ENCODE measurements at regions of chr1 and their contacts with region 1.

Region 1: DNA sequence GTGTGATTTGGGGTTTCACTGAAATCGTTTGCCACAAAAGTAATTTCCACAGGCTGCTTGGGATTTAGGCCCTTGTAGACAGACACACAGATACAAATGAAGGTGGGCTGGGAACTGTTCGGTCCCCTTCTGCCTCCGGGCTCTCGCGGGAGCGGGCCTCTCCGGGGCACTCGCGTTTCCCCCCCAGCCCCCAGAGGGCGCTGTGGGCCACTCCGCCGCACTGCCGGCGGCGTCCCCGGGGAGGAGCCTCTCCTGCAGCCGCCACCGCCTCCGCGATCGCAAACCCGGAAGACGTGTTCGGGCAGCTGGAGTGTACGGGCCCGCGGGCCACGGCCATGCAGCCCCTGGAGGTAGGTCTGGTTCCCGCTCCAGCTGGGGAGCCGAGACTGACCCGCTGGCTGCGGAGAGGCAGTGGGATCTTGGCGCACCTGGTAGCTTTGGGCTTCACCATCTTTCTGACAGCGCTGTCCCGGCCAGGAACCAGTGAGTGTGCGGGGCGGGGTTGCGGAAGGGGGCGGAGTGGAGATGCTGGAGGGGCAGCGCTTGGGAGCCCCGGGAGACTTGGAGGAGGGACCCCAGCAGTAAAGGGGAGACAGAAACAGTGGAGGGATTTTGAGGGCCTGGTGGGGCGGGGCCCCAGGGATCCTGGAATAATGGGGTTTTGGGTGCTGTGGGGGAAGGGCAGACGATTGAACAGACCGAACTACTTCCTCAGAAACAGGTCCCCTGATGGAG is at the start of gene CYB561D1:
- DNase-seq: peak; percentile 64 to 80
- ATAC-seq: peak; percentile 73 to 85
- H3K4me3 ChIP-seq: peak within 1 kb of the TSS; percentile 82 to 100 (median 97)
- H3K27ac ChIP-seq: peak within 1 kb of the TSS; percentile 62 to 86 (median 83)
- H3K4me1 ChIP-seq: peaks cover 11 to 27% of the 10 kb centered on the region in 2 donors
- H3K27me3 ChIP-seq: no peaks in the 10 kb centered on the region
- CTCF ChIP-seq: peak; percentile 90 to 98 (median 95)
- POLR2A ChIP-seq: peak; percentile 19 to 46
- total RNA-seq, gene CYB561D1: 3.1 to 8.0 (median 3.9) TPM

Region 2: GRCh38 chr1:109620841-109621286 is 126.9 kb after region 1 on chr1:
- in situ Hi-C with region 1: no loop called
- intact Hi-C with region 1: loop called (anchors 5 kb)
- DNase-seq: peak; percentile 69 to 75
- ATAC-seq: peak; percentile 48 to 51
- H3K4me3 ChIP-seq: peak overlapping the region; percentile 64 to 87 (median 66)
- H3K27ac ChIP-seq: peak overlapping the region; percentile 62 to 73 (median 71)
- H3K4me1 ChIP-seq: peaks cover 4 to 24% of the 10 kb centered on the region in 2 donors
- H3K27me3 ChIP-seq: peaks cover 0 to 4% (median 0%) of the 10 kb centered on the region in 3 donors
- CTCF ChIP-seq: no peak
- POLR2A ChIP-seq: no peak

Measured in gastrocnemius medialis (tissue), 4 donors.